ENCODE measurements at regions of chr14 and their contacts with region 1.

Region 1: DNA sequence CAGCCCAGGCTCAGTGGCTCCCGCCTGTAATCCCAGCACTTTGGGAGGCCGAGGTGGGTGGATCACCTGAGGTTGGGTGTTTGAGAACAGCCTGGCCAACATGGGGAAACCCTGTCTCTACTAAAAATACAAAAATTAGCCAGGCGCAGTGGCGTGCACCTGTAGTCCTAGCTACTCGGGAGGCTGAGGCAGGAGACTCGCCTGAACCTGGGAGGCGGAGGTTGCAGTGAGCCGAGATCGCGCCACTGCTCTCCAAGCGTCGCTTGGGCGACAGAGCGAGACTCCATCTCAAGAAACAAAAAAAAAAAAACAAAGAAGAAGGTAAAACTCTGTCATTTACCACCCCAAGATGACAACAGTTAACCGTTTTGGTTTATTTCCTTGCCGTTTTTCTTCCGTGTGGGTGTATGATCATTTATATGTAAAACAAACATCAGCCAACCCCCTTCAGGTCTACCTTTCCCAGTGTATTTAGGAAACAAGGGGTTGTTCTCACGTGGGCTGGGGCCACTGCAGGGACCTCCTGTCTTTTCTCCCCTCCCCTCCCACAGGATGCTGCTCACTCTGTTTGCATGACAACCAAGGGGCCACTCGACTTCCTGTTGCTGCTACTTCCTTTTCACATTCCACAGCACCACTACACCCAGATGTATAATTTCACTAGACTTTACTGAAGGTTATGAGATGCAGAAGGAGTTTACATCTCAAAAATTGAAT is 13.6 kb downstream of the TTC9 start:
- DNase-seq: peak; percentile 29 to 93 (median 91)
- ATAC-seq: peak; percentile 95
- H3K4me3 ChIP-seq: peak overlapping the region; percentile 43
- H3K4me3 Mint-ChIP-seq: peak overlapping the region; percentile 76 to 89 (median 85)
- H3K27ac ChIP-seq: peak overlapping the region; percentile 84
- H3K27ac Mint-ChIP-seq: peak overlapping the region; percentile 94 to 99 (median 98)
- H3K4me1 ChIP-seq: peaks cover 60 to 83% of the 10 kb centered on the region in 2 donors
- H3K4me1 Mint-ChIP-seq: peaks cover 66 to 98% (median 94%) of the 10 kb centered on the region in 7 donors
- H3K27me3 ChIP-seq: no peaks in the 10 kb centered on the region
- H3K27me3 Mint-ChIP-seq: no peaks in the 10 kb centered on the region

Region 2: DNA sequence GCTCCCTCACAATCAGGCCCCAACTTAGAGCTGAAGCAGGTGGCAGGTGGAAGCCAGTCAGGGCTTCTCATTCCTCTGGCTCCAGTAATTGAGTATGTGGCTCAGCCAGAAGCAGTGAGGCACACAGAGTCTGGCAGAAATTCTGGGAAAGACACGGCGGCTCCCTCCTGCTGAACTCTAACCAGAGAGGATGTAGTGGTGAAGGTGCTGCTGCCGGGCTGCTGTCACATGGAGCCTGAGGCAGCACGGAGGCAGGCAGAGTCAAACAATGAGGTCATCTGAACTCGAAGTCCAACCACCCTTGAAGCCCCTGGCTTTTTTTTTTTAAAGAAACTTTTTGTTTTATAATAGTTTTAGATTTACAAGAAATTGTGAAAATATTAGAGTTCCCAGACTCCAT is 809.5 kb before region 1 on chr14:
- CTCF ChIA-PET with region 1: no interaction called
- POLR2A ChIA-PET with region 1: no interaction called
- intact Hi-C with region 1: no loop called
- DNase-seq: no peak
- ATAC-seq: no peak
- H3K4me3 ChIP-seq: no peak overlapping the region
- H3K4me3 Mint-ChIP-seq: no peak overlapping the region
- H3K27ac ChIP-seq: no peak overlapping the region
- H3K27ac Mint-ChIP-seq: peak overlapping the region in 1 of 9 donors; percentile 28
- H3K4me1 ChIP-seq: no peaks in the 10 kb centered on the region
- H3K4me1 Mint-ChIP-seq: no peaks in the 10 kb centered on the region
- H3K27me3 ChIP-seq: no peaks in the 10 kb centered on the region
- H3K27me3 Mint-ChIP-seq: peaks cover 0 to 15% (median 10%) of the 10 kb centered on the region in 5 donors

Region 3: GRCh38 chr14:70809543-70810244 is 154.4 kb after region 1 on chr14:
- CTCF ChIA-PET with region 1: no interaction called
- POLR2A ChIA-PET with region 1: no interaction called
- intact Hi-C with region 1: loop called (anchors 1 to 2 kb)
- DNase-seq: peak; percentile 68 to 87 (median 78)
- ATAC-seq: peak; percentile 90
- H3K4me3 ChIP-seq: peak overlapping the region; percentile 73
- H3K4me3 Mint-ChIP-seq: peak overlapping the region in 1 of 10 donors; percentile 87
- H3K27ac ChIP-seq: peak overlapping the region; percentile 65
- H3K27ac Mint-ChIP-seq: peak overlapping the region in 6 of 9 donors; percentile 79 to 92 (median 88)
- H3K4me1 ChIP-seq: peaks cover 3 to 10% of the 10 kb centered on the region in 2 donors
- H3K4me1 Mint-ChIP-seq: peaks cover 9 to 17% (median 13%) of the 10 kb centered on the region in 7 donors
- H3K27me3 ChIP-seq: no peaks in the 10 kb centered on the region
- H3K27me3 Mint-ChIP-seq: peaks cover 0 to 9% (median 4%) of the 10 kb centered on the region in 5 donors

Region 4: DNA sequence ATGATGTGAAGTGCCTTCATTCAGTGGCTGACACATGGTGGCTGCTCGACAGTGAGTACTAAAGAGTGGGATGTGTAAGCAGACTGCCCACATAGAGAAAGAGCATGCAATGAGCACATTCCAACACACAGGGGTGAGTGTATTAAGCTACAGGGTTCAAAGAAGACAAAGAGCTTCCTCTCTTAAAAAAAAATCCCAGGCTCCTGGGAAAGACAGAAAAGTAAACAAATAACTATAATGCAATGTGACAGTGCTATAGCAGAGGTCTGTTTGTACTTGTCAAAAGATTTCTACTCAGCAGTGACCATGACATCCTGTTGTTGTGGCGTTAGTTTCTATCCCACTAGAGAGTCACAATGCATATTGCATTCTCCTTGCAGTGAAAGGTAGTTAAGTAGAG is 239.6 kb after region 1 on chr14:
- CTCF ChIA-PET with region 1: no interaction called
- POLR2A ChIA-PET with region 1: no interaction called
- intact Hi-C with region 1: loop called in 1 of 2 experiments (anchors 5 kb)
- DNase-seq: no peak
- ATAC-seq: no peak
- H3K4me3 ChIP-seq: no peak overlapping the region
- H3K4me3 Mint-ChIP-seq: peak overlapping the region in 3 of 10 donors; percentile 30 to 69 (median 67)
- H3K27ac ChIP-seq: no peak overlapping the region
- H3K27ac Mint-ChIP-seq: peak overlapping the region in 5 of 9 donors; percentile 3 to 74 (median 21)
- H3K4me1 ChIP-seq: peaks cover 10 to 31% of the 10 kb centered on the region in 2 donors
- H3K4me1 Mint-ChIP-seq: peaks cover 31 to 75% (median 50%) of the 10 kb centered on the region in 7 donors
- H3K27me3 ChIP-seq: no peaks in the 10 kb centered on the region
- H3K27me3 Mint-ChIP-seq: peaks cover 0 to 5% (median 0%) of the 10 kb centered on the region in 5 donors